T-cell (primary cell): ENCODE measurements at regions of chr21 and their contacts with region 1.

Region 1: GRCh38 chr21:34078915-34079314 is 5.5 kb downstream of the MRPS6 start:
- DNase-seq: peak in 6 of 35 experiments; percentile 6 to 43 (median 18)
- ATAC-seq: peak in 3 of 4 experiments; percentile 29 to 40 (median 34)
- H3K4me3 ChIP-seq: no peak overlapping the region
- H3K4me3 Mint-ChIP-seq: peak overlapping the region; percentile 54 to 97 (median 56)
- H3K27ac ChIP-seq: no peak overlapping the region
- H3K27ac Mint-ChIP-seq: peak overlapping the region; percentile 53 to 66
- H3K4me1 ChIP-seq: peaks cover 33 to 47% of the 10 kb centered on the region in 2 experiments
- H3K4me1 Mint-ChIP-seq: peaks cover 93 to 96% (median 95%) of the 10 kb centered on the region in 3 donors
- H3K27me3 ChIP-seq: no peaks in the 10 kb centered on the region
- H3K27me3 Mint-ChIP-seq: no peaks in the 10 kb centered on the region

Region 2: GRCh38 chr21:34100790-34101189 is 21.9 kb after region 1 on chr21:
- CTCF ChIA-PET with region 1: interaction called in 1 of 2 experiments, 11 read pairs
- POLR2A ChIA-PET with region 1: interaction called in 1 of 2 experiments, 3 read pairs
- DNase-seq: no peak
- ATAC-seq: no peak
- H3K4me3 ChIP-seq: no peak overlapping the region
- H3K4me3 Mint-ChIP-seq: no peak overlapping the region
- H3K27ac ChIP-seq: no peak overlapping the region
- H3K27ac Mint-ChIP-seq: no peak overlapping the region
- H3K4me1 ChIP-seq: peaks cover 0 to 3% of the 10 kb centered on the region in 2 experiments
- H3K4me1 Mint-ChIP-seq: peaks cover 80 to 92% (median 88%) of the 10 kb centered on the region in 3 donors
- H3K27me3 ChIP-seq: no peaks in the 10 kb centered on the region
- H3K27me3 Mint-ChIP-seq: no peaks in the 10 kb centered on the region

Region 3: GRCh38 chr21:34190576-34191321 is 111.8 kb after region 1 on chr21:
- CTCF ChIA-PET with region 1: interaction called in 1 of 2 experiments, 11 read pairs
- POLR2A ChIA-PET with region 1: interaction called in 1 of 2 experiments, 4 read pairs
- DNase-seq: no peak
- ATAC-seq: no peak
- H3K4me3 ChIP-seq: no peak overlapping the region
- H3K4me3 Mint-ChIP-seq: no peak overlapping the region
- H3K27ac ChIP-seq: no peak overlapping the region
- H3K27ac Mint-ChIP-seq: no peak overlapping the region
- H3K4me1 ChIP-seq: peaks cover 5 to 7% of the 10 kb centered on the region in 2 experiments
- H3K4me1 Mint-ChIP-seq: peaks cover 13 to 20% (median 18%) of the 10 kb centered on the region in 3 donors
- H3K27me3 ChIP-seq: no peaks in the 10 kb centered on the region
- H3K27me3 Mint-ChIP-seq: no peaks in the 10 kb centered on the region